Activated B cell treated with CpG ODN at 0.5 μM for 24 hours (primary cell): ENCODE measurements at regions of chrX and their contacts with region 1.

Region 1: GRCh38 chrX:283115-283845 is 2.1 kb downstream of the PLCXD1 start:
- DNase-seq: peak; percentile 81
- ATAC-seq: peak; percentile 98
- H3K4me3 Mint-ChIP-seq: peak overlapping the region; percentile 92
- H3K27ac Mint-ChIP-seq: peak overlapping the region; percentile 84
- H3K4me1 Mint-ChIP-seq: peaks cover 16% of the 10 kb centered on the region
- H3K27me3 Mint-ChIP-seq: no peaks in the 10 kb centered on the region
- CTCF ChIP-seq: no peak

Region 2: GRCh38 chrX:318739-319578 is 35.7 kb after region 1 on chrX and contains the start of gene GTPBP6:
- CTCF ChIA-PET with region 1: no interaction called
- POLR2A ChIA-PET with region 1: no interaction called
- intact Hi-C with region 1: loop called (anchors 1 kb)
- DNase-seq: peak; percentile 97
- ATAC-seq: peak; percentile 75
- H3K4me3 Mint-ChIP-seq: peak within 1 kb of the TSS; percentile 94
- H3K27ac Mint-ChIP-seq: peak within 1 kb of the TSS; percentile 98
- H3K4me1 Mint-ChIP-seq: peaks cover 32% of the 10 kb centered on the region
- H3K27me3 Mint-ChIP-seq: no peaks in the 10 kb centered on the region
- CTCF ChIP-seq: no peak
- total RNA-seq, gene GTPBP6: 69.9 and 75.6 TPM in 2 replicates